T-cell (primary cell): ENCODE measurements at regions of chrX and their contacts with region 1.

Region 1: DNA sequence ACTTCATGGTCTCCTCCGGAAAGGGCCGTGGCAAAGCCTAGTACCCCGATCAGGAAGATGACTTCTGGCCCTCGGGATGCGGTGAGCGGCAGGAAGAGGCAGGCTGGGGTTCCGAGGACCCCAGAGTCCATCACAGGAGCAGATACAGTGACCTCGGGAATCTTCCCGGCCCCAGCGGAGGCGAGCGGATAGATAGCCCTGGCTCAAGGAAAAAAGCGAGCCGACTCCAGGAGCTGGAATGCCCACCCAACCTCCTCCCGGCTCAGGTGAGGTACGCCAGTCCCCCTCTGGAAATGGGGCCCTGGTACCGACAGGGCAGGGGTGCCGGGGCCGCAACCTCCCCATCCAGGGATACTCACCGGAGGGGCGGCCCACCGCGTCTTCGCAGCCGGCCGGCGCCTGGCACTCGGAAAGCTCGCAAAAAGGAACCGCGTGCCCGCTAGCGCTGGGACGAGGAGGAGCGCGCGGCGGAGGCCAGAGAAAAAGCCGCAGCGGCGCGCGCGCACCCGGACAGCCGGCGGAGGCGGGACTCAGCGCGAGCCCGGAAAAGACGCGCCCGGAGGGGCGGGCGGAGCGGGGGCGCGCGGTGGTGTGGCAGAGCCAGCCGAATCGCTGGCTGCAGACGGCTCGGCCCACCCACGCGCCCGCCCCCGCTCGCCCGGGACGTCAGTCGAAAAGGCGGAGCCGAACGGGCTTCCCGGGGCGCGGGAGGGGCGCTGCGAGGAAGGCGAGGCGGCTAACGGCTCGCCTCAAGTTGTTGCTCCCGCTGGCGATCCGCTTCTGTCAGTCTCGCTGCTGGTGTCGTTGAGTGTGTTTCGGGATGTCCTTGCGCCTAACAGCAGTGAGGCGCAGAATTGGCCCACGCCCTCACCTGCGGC is at the start of gene ACSL4:
- DNase-seq: peak; percentile 64 to 88 (median 81)
- ATAC-seq: peak; percentile 90 to 97 (median 93)
- H3K4me3 ChIP-seq: peak within 1 kb of the TSS; percentile 54 to 96
- H3K4me3 Mint-ChIP-seq: peak within 1 kb of the TSS; percentile 92 to 100 (median 94)
- H3K27ac ChIP-seq: peak within 1 kb of the TSS; percentile 83
- H3K27ac Mint-ChIP-seq: peak within 1 kb of the TSS; percentile 94 to 96
- H3K4me1 ChIP-seq: peaks cover 4 to 6% of the 10 kb centered on the region in 2 experiments
- H3K4me1 Mint-ChIP-seq: peaks cover 26 to 39% (median 33%) of the 10 kb centered on the region in 3 donors
- H3K27me3 ChIP-seq: no peaks in the 10 kb centered on the region
- H3K27me3 Mint-ChIP-seq: peaks cover 0 to 5% of the 10 kb centered on the region in 2 donors
- total RNA-seq, gene ACSL4: 16.0 to 27.3 (median 17.1) TPM

Region 2: GRCh38 chrX:109714340-109714958 is 18.6 kb before region 1 on chrX:
- CTCF ChIA-PET with region 1: interaction called, 4 to 14 read pairs
- POLR2A ChIA-PET with region 1: no interaction called
- DNase-seq: no peak
- ATAC-seq: no peak
- H3K4me3 ChIP-seq: no peak overlapping the region
- H3K4me3 Mint-ChIP-seq: no peak overlapping the region
- H3K27ac ChIP-seq: no peak overlapping the region
- H3K27ac Mint-ChIP-seq: no peak overlapping the region
- H3K4me1 ChIP-seq: peaks cover 0 to 4% of the 10 kb centered on the region in 2 experiments
- H3K4me1 Mint-ChIP-seq: peaks cover 17 to 37% (median 23%) of the 10 kb centered on the region in 3 donors
- H3K27me3 ChIP-seq: no peaks in the 10 kb centered on the region
- H3K27me3 Mint-ChIP-seq: peaks cover 0 to 4% of the 10 kb centered on the region in 2 donors

Region 3: GRCh38 chrX:109840585-109840984 is 107.6 kb after region 1 on chrX:
- CTCF ChIA-PET with region 1: no interaction called
- POLR2A ChIA-PET with region 1: no interaction called
- DNase-seq: no peak
- ATAC-seq: no peak
- H3K4me3 ChIP-seq: no peak overlapping the region
- H3K4me3 Mint-ChIP-seq: no peak overlapping the region
- H3K27ac ChIP-seq: no peak overlapping the region
- H3K27ac Mint-ChIP-seq: no peak overlapping the region
- H3K4me1 ChIP-seq: no peaks in the 10 kb centered on the region
- H3K4me1 Mint-ChIP-seq: no peaks in the 10 kb centered on the region
- H3K27me3 ChIP-seq: no peaks in the 10 kb centered on the region
- H3K27me3 Mint-ChIP-seq: peaks cover 0 to 4% of the 10 kb centered on the region in 2 donors

Region 4: GRCh38 chrX:109974906-109975655 is 242.1 kb after region 1 on chrX:
- CTCF ChIA-PET with region 1: no interaction called
- POLR2A ChIA-PET with region 1: no interaction called
- DNase-seq: no peak
- ATAC-seq: peak in 1 of 4 experiments; percentile 26
- H3K4me3 ChIP-seq: no peak overlapping the region
- H3K4me3 Mint-ChIP-seq: no peak overlapping the region
- H3K27ac ChIP-seq: no peak overlapping the region
- H3K27ac Mint-ChIP-seq: no peak overlapping the region
- H3K4me1 ChIP-seq: no peaks in the 10 kb centered on the region
- H3K4me1 Mint-ChIP-seq: peaks cover 0 to 5% (median 0%) of the 10 kb centered on the region in 3 donors
- H3K27me3 ChIP-seq: peaks cover 0 to 2% of the 10 kb centered on the region in 2 experiments
- H3K27me3 Mint-ChIP-seq: peaks cover 6 to 22% of the 10 kb centered on the region in 2 donors

Region 5: GRCh38 chrX:110108381-110108821 is 375.4 kb after region 1 on chrX:
- CTCF ChIA-PET with region 1: interaction called in 1 of 2 experiments, 10 read pairs
- POLR2A ChIA-PET with region 1: no interaction called
- DNase-seq: no peak
- ATAC-seq: no peak
- H3K4me3 ChIP-seq: no peak overlapping the region
- H3K4me3 Mint-ChIP-seq: no peak overlapping the region
- H3K27ac ChIP-seq: no peak overlapping the region
- H3K27ac Mint-ChIP-seq: no peak overlapping the region
- H3K4me1 ChIP-seq: no peaks in the 10 kb centered on the region
- H3K4me1 Mint-ChIP-seq: no peaks in the 10 kb centered on the region
- H3K27me3 ChIP-seq: no peaks in the 10 kb centered on the region
- H3K27me3 Mint-ChIP-seq: no peaks in the 10 kb centered on the region